ENCODE measurements at regions of chr11 and their contacts with region 1.

Region 1: GRCh38 chr11:108302121-108302785 is 79.4 kb downstream of the ATM start:
- DNase-seq: no peak
- ATAC-seq: no peak
- H3K4me3 Mint-ChIP-seq: no peak overlapping the region
- H3K27ac Mint-ChIP-seq: peak overlapping the region in 8 of 10 donors; percentile 22 to 80 (median 64)
- H3K4me1 Mint-ChIP-seq: peaks cover 9 to 36% (median 31%) of the 10 kb centered on the region in 4 donors
- H3K27me3 Mint-ChIP-seq: no peaks in the 10 kb centered on the region

Region 2: GRCh38 chr11:108237058-108237481 is 65.2 kb before region 1 on chr11:
- POLR2A ChIA-PET with region 1: no interaction called
- DNase-seq: peak in 3 of 10 donors; percentile 27 to 49 (median 43)
- ATAC-seq: peak; percentile 33 to 53
- H3K4me3 Mint-ChIP-seq: peak overlapping the region; percentile 23 to 87 (median 73)
- H3K27ac Mint-ChIP-seq: peak overlapping the region in 9 of 10 donors; percentile 90 to 98 (median 96)
- H3K4me1 Mint-ChIP-seq: peaks cover 29 to 88% (median 77%) of the 10 kb centered on the region in 4 donors
- H3K27me3 Mint-ChIP-seq: no peaks in the 10 kb centered on the region

Region 3: DNA sequence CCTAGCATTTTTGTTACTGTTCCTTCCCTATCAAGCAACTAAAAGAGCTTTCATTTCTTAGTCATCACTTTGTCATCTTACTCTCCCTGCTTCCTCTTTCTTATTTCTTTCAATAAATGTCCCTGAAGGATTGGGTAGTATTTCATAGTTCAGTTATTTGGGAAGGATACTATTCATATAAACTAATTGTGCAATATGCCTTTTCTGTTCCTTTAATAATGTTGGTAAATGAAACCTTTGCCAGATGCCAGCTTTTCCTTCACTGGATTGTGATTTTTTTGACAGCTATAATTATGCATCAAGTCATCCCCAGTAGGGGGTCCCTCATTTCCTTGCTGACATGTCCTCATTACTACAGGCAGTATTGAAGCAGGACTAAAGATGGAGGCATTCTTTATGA is 22.3 kb after region 1 on chr11:
- POLR2A ChIA-PET with region 1: no interaction called
- DNase-seq: no peak
- ATAC-seq: no peak
- H3K4me3 Mint-ChIP-seq: no peak overlapping the region
- H3K27ac Mint-ChIP-seq: peak overlapping the region in 7 of 10 donors; percentile 8 to 69 (median 65)
- H3K4me1 Mint-ChIP-seq: peaks cover 2 to 29% (median 16%) of the 10 kb centered on the region in 4 donors
- H3K27me3 Mint-ChIP-seq: no peaks in the 10 kb centered on the region

Region 4: GRCh38 chr11:108351458-108351857 is 49.2 kb after region 1 on chr11:
- POLR2A ChIA-PET with region 1: interaction called, 10 read pairs
- DNase-seq: no peak
- ATAC-seq: no peak
- H3K4me3 Mint-ChIP-seq: no peak overlapping the region
- H3K27ac Mint-ChIP-seq: peak overlapping the region in 8 of 10 donors; percentile 1 to 70 (median 52)
- H3K4me1 Mint-ChIP-seq: peaks cover 0 to 25% (median 14%) of the 10 kb centered on the region in 4 donors
- H3K27me3 Mint-ChIP-seq: no peaks in the 10 kb centered on the region

Measured in naive thymus-derived CD8-positive, alpha-beta T cell (primary cell).